ENCODE measurements at regions of chr11 and their contacts with region 1.

Region 1: GRCh38 chr11:128695539-128696221 is 1.8 kb downstream of the FLI1 start:
- DNase-seq: peak in 6 of 10 donors; percentile 16 to 60 (median 44)
- ATAC-seq: peak; percentile 35 to 60
- H3K4me3 Mint-ChIP-seq: peak overlapping the region; percentile 86 to 99 (median 94)
- H3K27ac Mint-ChIP-seq: peak overlapping the region; percentile 89 to 98 (median 92)
- H3K4me1 Mint-ChIP-seq: peaks cover 37 to 83% (median 67%) of the 10 kb centered on the region in 4 donors
- H3K27me3 Mint-ChIP-seq: no peaks in the 10 kb centered on the region

Region 2: GRCh38 chr11:128720522-128720985 is 24.9 kb after region 1 on chr11:
- POLR2A ChIA-PET with region 1: interaction called, 75 read pairs
- DNase-seq: peak in 7 of 10 donors; percentile 18 to 65 (median 40)
- ATAC-seq: peak; percentile 32 to 50
- H3K4me3 Mint-ChIP-seq: peak overlapping the region; percentile 76 to 94 (median 86)
- H3K27ac Mint-ChIP-seq: peak overlapping the region; percentile 93 to 98 (median 96)
- H3K4me1 Mint-ChIP-seq: peaks cover 78 to 100% (median 99%) of the 10 kb centered on the region in 4 donors
- H3K27me3 Mint-ChIP-seq: peaks cover 0 to 1% (median 0%) of the 10 kb centered on the region in 5 donors

Region 3: GRCh38 chr11:128725630-128726319 is 30.1 kb after region 1 on chr11:
- POLR2A ChIA-PET with region 1: interaction called, 75 read pairs
- DNase-seq: peak in 9 of 10 donors; percentile 40 to 89 (median 77)
- ATAC-seq: peak; percentile 62 to 73
- H3K4me3 Mint-ChIP-seq: peak overlapping the region; percentile 73 to 93 (median 86)
- H3K27ac Mint-ChIP-seq: peak overlapping the region; percentile 82 to 98 (median 95)
- H3K4me1 Mint-ChIP-seq: peaks cover 72 to 100% (median 99%) of the 10 kb centered on the region in 4 donors
- H3K27me3 Mint-ChIP-seq: peaks cover 0 to 2% (median 0%) of the 10 kb centered on the region in 5 donors

Region 4: GRCh38 chr11:128733440-128734102 is 37.9 kb after region 1 on chr11:
- POLR2A ChIA-PET with region 1: interaction called, 38 read pairs
- DNase-seq: peak in 4 of 10 donors; percentile 25 to 40 (median 30)
- ATAC-seq: peak; percentile 49 to 50
- H3K4me3 Mint-ChIP-seq: peak overlapping the region; percentile 67 to 93 (median 84)
- H3K27ac Mint-ChIP-seq: peak overlapping the region; percentile 82 to 97 (median 92)
- H3K4me1 Mint-ChIP-seq: peaks cover 59 to 100% (median 99%) of the 10 kb centered on the region in 4 donors
- H3K27me3 Mint-ChIP-seq: no peaks in the 10 kb centered on the region

Region 5: DNA sequence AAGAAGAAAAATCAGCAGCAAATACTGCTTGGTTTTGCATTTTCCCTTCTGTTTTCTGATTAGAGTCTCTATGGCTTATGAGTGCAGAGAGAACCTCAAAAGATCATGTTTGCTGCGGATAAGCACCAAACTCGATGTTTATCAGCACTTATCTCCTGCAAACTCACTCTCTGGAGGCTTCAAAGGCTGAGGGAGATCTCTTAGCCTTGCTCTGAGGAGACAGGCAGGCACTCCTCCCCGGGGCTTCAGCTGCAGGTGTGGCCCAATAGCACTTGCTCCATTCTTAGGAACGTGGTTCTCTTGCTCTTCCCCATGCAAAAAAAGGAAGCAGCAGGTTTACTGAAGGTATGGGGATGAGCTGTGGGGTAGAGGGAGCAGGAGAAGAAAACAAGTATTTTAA is 43.3 kb after region 1 on chr11:
- POLR2A ChIA-PET with region 1: interaction called, 25 read pairs
- DNase-seq: peak in 3 of 10 donors; percentile 24 to 44 (median 44)
- ATAC-seq: peak; percentile 61 to 66
- H3K4me3 Mint-ChIP-seq: peak overlapping the region; percentile 69 to 87 (median 83)
- H3K27ac Mint-ChIP-seq: peak overlapping the region; percentile 89 to 97 (median 95)
- H3K4me1 Mint-ChIP-seq: peaks cover 40 to 97% (median 93%) of the 10 kb centered on the region in 4 donors
- H3K27me3 Mint-ChIP-seq: no peaks in the 10 kb centered on the region

Region 6: GRCh38 chr11:128757235-128757711 is 61.6 kb after region 1 on chr11:
- POLR2A ChIA-PET with region 1: interaction called, 11 read pairs
- DNase-seq: peak in 8 of 10 donors; percentile 56 to 84 (median 68)
- ATAC-seq: peak; percentile 97 to 98
- H3K4me3 Mint-ChIP-seq: peak overlapping the region in 8 of 10 donors; percentile 11 to 77 (median 44)
- H3K27ac Mint-ChIP-seq: peak overlapping the region; percentile 45 to 95 (median 85)
- H3K4me1 Mint-ChIP-seq: peaks cover 51 to 96% (median 86%) of the 10 kb centered on the region in 4 donors
- H3K27me3 Mint-ChIP-seq: no peaks in the 10 kb centered on the region

Measured in naive thymus-derived CD8-positive, alpha-beta T cell (primary cell).